GM12878 (cell line): ENCODE measurements at regions of chr11 and their contacts with region 1.

Region 1: DNA sequence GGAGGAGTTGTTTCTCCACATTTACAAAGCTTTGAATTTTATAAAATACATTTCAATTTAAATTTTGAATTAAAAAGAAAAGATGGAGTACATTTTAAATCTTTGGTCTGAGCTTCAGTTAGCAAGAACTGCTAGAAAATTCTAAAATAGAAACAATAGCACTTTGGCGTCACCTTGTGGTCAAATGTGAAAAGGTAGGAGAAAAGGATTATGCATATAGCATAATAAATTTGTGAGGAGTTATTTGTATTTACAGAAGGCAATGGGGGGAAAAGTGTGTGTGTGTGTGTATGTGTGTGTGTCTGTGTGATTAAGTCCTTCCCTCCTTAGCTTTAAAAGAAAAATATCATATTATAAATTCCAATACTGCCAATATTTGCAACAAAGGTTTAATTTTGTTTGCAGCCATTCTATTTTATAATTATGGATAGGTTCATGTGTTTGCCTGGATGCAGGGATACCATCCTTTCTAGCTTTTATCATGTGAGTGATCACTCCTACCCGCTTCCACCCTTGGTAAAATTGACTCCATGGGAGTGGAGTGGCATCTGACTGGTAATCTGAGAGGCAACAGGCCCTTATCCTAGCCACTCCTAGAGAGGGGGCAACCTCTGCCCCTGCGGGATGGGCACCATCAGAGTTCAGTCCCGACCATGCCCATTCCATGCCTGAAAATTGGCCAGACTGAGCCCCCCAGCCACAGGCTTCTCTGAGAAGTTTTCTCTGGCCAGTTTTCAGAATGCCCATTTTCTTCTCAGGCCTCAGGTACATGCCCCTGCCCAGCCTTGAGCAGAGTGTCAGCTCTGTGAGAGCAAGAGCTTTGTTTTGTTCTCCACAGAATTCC is 13.6 kb upstream of the LGR4 start:
- DNase-seq: no peak
- ATAC-seq: peak; percentile 82
- H3K4me3 ChIP-seq: no peak overlapping the region
- H3K27ac ChIP-seq: no peak overlapping the region
- H3K4me1 ChIP-seq: no peaks in the 10 kb centered on the region
- H3K27me3 ChIP-seq: no peaks in the 10 kb centered on the region
- CTCF ChIP-seq: peak; percentile 80 to 87 (median 82); a peak in 5 of 6 replicates
- EP300 ChIP-seq: no peak
- POLR2A ChIP-seq: no peak
- RAD21 ChIP-seq: peak; percentile 96

Region 2: DNA sequence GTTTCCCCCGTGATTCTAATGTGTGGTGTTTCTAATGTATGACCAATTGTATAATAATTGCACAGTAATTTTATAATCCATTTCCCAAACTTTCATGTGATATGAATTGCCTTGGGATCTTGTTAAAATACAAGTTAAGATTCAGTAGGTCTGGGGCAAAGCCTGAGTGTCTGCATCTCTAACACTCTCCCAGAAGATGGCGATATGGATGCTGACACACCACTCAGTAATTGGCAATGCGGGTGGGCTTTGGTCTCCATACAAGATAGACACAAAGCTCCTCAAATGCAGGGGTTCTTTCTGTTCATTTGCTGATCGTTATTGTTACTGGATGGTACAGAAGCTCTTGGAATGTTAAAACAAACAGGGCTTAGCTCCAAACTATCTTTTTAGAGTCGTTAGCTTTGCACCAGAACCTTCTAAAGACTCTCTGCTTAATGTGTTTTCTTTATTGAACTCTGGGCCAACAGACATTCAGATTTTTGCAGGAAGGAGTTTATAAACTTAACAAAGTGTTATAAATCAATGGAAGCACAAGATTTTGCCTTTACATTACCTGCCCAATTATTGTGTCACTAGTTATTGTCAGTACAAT is 1199.6 kb before region 1 on chr11:
- CTCF ChIA-PET with region 1: interaction called, 6 read pairs
- POLR2A ChIA-PET with region 1: no interaction called
- RAD21 ChIA-PET with region 1: interaction called, 4 read pairs
- SMC1A ChIA-PET with region 1: no interaction called
- in situ Hi-C with region 1: no loop called
- intact Hi-C with region 1: loop called (anchors 10 kb)
- DNase-seq: no peak
- ATAC-seq: peak; percentile 82
- H3K4me3 ChIP-seq: no peak overlapping the region
- H3K27ac ChIP-seq: no peak overlapping the region
- H3K4me1 ChIP-seq: no peaks in the 10 kb centered on the region
- H3K27me3 ChIP-seq: no peaks in the 10 kb centered on the region
- CTCF ChIP-seq: peak; percentile 34 to 56 (median 52); a peak in 3 of 6 replicates
- EP300 ChIP-seq: no peak
- POLR2A ChIP-seq: no peak
- RAD21 ChIP-seq: peak; percentile 33; the same call in 1 of the 2 replicates

Region 3: DNA sequence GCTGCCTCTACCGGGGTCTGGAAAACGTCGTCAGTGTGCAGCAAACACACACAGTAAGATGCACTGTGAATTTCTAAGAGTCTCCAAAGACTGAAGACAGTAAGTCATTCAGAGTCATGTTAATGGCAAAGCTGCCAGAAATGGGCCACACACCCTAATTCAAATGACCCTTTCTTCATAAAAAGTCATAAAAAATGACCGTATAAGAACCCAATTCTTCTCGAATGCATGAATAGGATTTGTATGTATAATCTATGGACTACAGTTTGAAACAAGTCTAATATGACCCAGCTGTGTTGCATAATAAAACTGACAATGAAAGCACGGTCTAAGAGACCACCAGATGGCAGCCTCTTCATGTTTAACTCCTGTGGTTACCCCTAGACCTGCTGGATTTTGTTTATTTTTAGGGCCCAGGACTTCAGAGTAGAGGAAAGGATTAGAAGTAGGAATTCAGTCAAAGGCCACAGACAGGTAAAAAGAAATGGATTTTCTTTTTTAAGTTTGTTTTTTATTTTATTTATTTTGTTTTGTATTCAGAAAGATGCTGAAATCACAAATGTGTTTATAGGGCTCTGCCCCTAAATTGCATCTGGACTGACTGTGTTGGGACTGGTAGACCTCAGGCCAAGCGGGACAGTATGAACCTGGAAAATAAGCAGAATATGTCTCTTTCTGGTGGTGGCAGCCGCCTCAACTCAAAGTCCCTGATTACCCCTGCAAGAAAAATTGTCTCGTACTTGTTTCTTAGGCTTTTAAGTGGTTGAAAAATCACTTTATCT is 732.2 kb before region 1 on chr11:
- CTCF ChIA-PET with region 1: interaction called, 9 read pairs
- POLR2A ChIA-PET with region 1: interaction called, 3 read pairs
- RAD21 ChIA-PET with region 1: no interaction called
- SMC1A ChIA-PET with region 1: interaction called, 5 read pairs
- in situ Hi-C with region 1: no loop called
- intact Hi-C with region 1: loop called (anchors 5 kb)
- DNase-seq: no peak
- ATAC-seq: peak; percentile 94
- H3K4me3 ChIP-seq: no peak overlapping the region
- H3K27ac ChIP-seq: no peak overlapping the region
- H3K4me1 ChIP-seq: no peaks in the 10 kb centered on the region
- H3K27me3 ChIP-seq: 0 out of 4 replicates have a peak, but pooled peaks cover 0 to 2% of the 10 kb centered on the region in 2 experiments
- CTCF ChIP-seq: peak; percentile 34 to 56 (median 51); a peak in 4 of 6 replicates
- EP300 ChIP-seq: no peak
- POLR2A ChIP-seq: no peak
- RAD21 ChIP-seq: peak; percentile 68

Region 4: GRCh38 chr11:27183672-27184457 is 302.3 kb before region 1 on chr11:
- CTCF ChIA-PET with region 1: interaction called, 142 read pairs
- POLR2A ChIA-PET with region 1: no interaction called
- RAD21 ChIA-PET with region 1: interaction called, 67 read pairs
- SMC1A ChIA-PET with region 1: interaction called, 73 read pairs
- in situ Hi-C with region 1: loop called (anchors 5 kb)
- intact Hi-C with region 1: loop called (anchors 1 kb)
- DNase-seq: peak; percentile 12
- ATAC-seq: peak; percentile 80
- H3K4me3 ChIP-seq: no peak overlapping the region
- H3K27ac ChIP-seq: no peak overlapping the region
- H3K4me1 ChIP-seq: no peaks in the 10 kb centered on the region
- H3K27me3 ChIP-seq: no peaks in the 10 kb centered on the region
- CTCF ChIP-seq: peak; percentile 57 to 76 (median 59)
- EP300 ChIP-seq: no peak
- POLR2A ChIP-seq: no peak
- RAD21 ChIP-seq: peak; percentile 91

Region 5: GRCh38 chr11:27362749-27363575 is 123.2 kb before region 1 on chr11 and contains the start of gene CCDC34:
- CTCF ChIA-PET with region 1: interaction called, 3 read pairs
- POLR2A ChIA-PET with region 1: no interaction called
- RAD21 ChIA-PET with region 1: no interaction called
- SMC1A ChIA-PET with region 1: no interaction called
- in situ Hi-C with region 1: no loop called
- intact Hi-C with region 1: loop called (anchors 5 kb)
- DNase-seq: peak; percentile 48
- ATAC-seq: peak; percentile 99
- H3K4me3 ChIP-seq: peak within 1 kb of the TSS; percentile 81
- H3K27ac ChIP-seq: peak within 1 kb of the TSS; percentile 69
- H3K4me1 ChIP-seq: peaks cover 3% of the 10 kb centered on the region; the same call in 1 of the 2 replicates
- H3K27me3 ChIP-seq: no peaks in the 10 kb centered on the region
- CTCF ChIP-seq: no peak
- EP300 ChIP-seq: no peak
- POLR2A ChIP-seq: peak; percentile 78
- RAD21 ChIP-seq: no peak
- polyA plus RNA-seq, gene CCDC34: 6.2 to 13.4 TPM

Region 6: DNA sequence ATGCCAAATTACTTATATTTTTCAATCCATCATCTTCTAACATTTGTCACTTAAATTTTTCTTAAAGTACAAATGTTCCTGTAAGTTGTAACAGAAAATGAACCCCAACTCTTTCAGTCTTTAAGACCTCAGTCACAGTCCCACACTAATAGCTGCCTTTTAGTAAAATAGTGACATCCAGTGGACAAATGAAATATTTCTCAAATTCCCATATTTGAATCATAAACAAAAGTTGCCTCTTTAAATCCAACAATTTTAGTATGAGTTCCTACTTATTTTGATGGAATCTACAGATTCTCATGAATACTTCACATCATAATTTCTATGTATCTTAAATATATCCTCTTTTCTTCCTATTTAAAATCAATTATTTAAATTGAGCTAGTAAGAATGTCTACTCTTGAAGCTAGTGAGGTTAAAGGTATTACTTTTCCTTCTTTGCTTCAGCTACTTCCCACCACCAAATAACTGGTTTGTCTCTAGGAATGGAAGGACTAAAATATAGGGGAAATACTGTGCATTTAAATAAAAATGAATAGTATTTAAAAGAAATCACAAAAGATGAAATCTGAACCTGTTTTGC is 11.2 kb after region 1 on chr11:
- CTCF ChIA-PET with region 1: interaction called, 119 read pairs
- POLR2A ChIA-PET with region 1: no interaction called
- RAD21 ChIA-PET with region 1: interaction called, 40 read pairs
- SMC1A ChIA-PET with region 1: interaction called, 71 read pairs
- in situ Hi-C with region 1: no loop called
- intact Hi-C with region 1: no loop called
- DNase-seq: no peak
- ATAC-seq: peak; percentile 86
- H3K4me3 ChIP-seq: no peak overlapping the region
- H3K27ac ChIP-seq: no peak overlapping the region
- H3K4me1 ChIP-seq: no peaks in the 10 kb centered on the region
- H3K27me3 ChIP-seq: no peaks in the 10 kb centered on the region
- CTCF ChIP-seq: peak; percentile 28 to 51 (median 30); a peak in 4 of 6 replicates
- EP300 ChIP-seq: no peak
- POLR2A ChIP-seq: no peak
- RAD21 ChIP-seq: peak; percentile 41; the same call in 1 of the 2 replicates

Region 7: GRCh38 chr11:28107748-28108618 is 621.8 kb after region 1 on chr11 and contains the starts of genes KIF18A and METTL15:
- CTCF ChIA-PET with region 1: no interaction called
- POLR2A ChIA-PET with region 1: no interaction called
- RAD21 ChIA-PET with region 1: no interaction called
- SMC1A ChIA-PET with region 1: no interaction called
- in situ Hi-C with region 1: no loop called
- intact Hi-C with region 1: no loop called
- DNase-seq: peak; percentile 96
- ATAC-seq: peak; percentile 91
- H3K4me3 ChIP-seq: peak within 1 kb of the TSS; percentile 86
- H3K27ac ChIP-seq: peak within 1 kb of the TSS; percentile 84
- H3K4me1 ChIP-seq: peaks cover 6% of the 10 kb centered on the region
- H3K27me3 ChIP-seq: no peaks in the 10 kb centered on the region
- CTCF ChIP-seq: no peak
- EP300 ChIP-seq: peak in 1 of 2 experiments; percentile 5; a peak in 1 of 4 replicates
- POLR2A ChIP-seq: peak; percentile 92
- RAD21 ChIP-seq: no peak
- polyA plus RNA-seq, gene KIF18A: 11.5 to 14.9 TPM
- polyA plus RNA-seq, gene METTL15: 10.5 to 15.1 TPM